HEK293T (cell line): ENCODE measurements at regions of chr17 and their contacts with region 1.

Region 1: GRCh38 chr17:1908699-1909309 is 79.0 kb downstream of the RPA1 start:
- DNase-seq: peak; percentile 77

Region 2: DNA sequence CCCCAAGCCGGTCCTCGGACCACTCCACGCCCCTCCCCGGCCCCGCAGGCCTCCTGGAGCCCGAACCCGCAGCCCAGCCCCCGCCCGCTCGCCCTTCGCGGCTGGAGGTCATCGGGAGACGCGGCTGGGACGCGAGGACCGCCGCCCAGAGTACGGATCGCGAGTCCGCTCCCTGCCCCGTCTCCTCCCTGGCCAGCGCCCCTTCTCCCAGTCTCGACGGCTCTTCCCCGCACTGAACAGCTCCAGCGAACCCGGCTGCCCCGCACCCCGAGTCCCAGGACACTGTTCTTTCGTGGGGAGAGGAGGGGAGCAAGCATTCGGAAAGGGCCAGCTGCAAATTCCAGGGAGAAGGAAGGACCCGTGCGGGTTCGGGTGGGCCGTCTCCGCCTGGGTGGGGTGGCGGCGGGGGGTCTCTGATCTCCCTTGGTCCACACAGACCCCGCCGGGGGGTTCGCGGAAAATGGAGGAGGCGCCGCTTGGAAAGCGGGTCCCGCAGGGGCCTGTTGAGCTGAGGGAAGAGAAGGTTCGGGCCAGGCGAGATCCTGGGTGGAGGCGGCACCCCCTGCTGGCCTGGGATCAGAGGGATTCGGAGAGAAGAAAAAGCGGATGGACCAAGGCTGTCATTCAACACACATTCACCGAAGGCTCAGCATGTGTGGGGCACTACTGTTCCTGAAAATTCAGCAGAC is 117.0 kb after region 1 on chr17:
- CTCF ChIA-PET with region 1: interaction called, 19 read pairs
- POLR2A ChIA-PET with region 1: interaction called, 7 read pairs
- DNase-seq: peak; percentile 65